BJ (cell line): ENCODE measurements at regions of chr22 and their contacts with region 1.

Region 1: GRCh38 chr22:37658133-37659065 is at the start of gene PDXP:
- DNase-seq: peak; percentile 99
- H3K4me3 ChIP-seq: peak within 1 kb of the TSS; percentile 72
- H3K27me3 ChIP-seq: no peaks in the 10 kb centered on the region
- CTCF ChIP-seq: no peak
- polyA plus RNA-seq, gene PDXP: 16.4 and 24.0 TPM in 2 replicates

Region 2: DNA sequence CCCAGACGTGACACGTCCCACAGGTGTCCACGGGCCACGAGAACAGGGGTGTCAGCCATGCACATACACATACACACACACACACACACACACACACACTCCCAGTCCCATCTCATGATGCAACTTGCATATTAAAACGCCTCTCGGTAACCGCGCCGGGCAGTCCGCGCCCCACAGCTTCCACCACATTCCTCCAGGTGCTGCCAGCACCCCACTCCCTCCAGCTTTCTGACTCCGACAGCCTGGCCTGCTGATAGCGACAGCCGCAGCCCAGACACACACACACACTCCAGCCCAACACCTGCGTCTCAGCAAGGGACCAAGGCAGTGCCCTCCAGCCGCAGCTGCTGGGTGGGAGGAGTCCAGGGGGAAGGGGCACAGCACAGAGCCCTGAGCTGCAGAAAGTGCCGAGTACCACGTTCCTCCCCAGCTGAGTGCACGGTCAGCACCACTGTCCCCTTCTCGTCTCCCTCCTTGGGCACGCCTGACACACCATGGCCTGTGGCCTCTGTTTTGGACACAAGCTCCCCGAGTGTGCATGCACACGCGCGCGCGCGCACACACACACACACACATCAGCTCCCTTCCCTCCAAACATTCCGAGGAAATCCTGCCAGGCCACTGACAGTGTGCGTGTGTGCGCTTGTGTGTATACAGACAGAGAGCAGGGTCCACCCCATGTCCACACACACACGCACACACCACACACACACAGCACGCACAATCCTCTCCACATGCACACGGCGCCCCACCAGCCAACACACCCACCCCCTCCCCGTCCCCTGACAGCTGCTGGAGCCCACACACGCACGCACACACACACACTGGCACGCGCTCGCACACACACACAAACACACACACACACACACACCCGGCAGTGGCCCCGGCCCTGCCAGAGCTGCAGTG is 232.3 kb before region 1 on chr22:
- CTCF ChIA-PET with region 1: no interaction called
- POLR2A ChIA-PET with region 1: no interaction called
- DNase-seq: no peak
- H3K4me3 ChIP-seq: peak overlapping the region; percentile 53
- H3K27me3 ChIP-seq: peaks cover 20% of the 10 kb centered on the region
- CTCF ChIP-seq: no peak

Region 3: DNA sequence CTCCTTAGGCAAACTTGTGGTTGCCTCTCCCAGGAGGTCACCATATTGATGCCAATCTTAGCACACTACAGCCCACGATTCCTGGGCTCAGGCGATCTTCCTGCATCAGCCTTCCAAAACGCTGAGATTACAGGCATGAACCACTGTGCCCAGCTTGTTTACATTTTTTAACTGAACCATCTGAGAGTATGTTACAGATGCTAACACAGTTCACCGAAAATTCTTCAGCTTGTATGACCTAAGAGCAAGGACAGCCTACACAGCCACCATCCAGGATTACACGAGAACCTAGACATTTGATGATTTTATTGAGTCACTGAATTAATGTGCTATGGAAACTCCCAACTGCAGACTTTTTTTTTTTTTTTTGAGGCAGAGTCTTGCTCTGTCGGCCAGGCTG is 11.2 kb after region 1 on chr22:
- CTCF ChIA-PET with region 1: interaction called, 11 read pairs
- POLR2A ChIA-PET with region 1: interaction called, 16 read pairs
- DNase-seq: no peak
- H3K4me3 ChIP-seq: no peak overlapping the region
- H3K27me3 ChIP-seq: no peaks in the 10 kb centered on the region
- CTCF ChIP-seq: no peak

Region 4: DNA sequence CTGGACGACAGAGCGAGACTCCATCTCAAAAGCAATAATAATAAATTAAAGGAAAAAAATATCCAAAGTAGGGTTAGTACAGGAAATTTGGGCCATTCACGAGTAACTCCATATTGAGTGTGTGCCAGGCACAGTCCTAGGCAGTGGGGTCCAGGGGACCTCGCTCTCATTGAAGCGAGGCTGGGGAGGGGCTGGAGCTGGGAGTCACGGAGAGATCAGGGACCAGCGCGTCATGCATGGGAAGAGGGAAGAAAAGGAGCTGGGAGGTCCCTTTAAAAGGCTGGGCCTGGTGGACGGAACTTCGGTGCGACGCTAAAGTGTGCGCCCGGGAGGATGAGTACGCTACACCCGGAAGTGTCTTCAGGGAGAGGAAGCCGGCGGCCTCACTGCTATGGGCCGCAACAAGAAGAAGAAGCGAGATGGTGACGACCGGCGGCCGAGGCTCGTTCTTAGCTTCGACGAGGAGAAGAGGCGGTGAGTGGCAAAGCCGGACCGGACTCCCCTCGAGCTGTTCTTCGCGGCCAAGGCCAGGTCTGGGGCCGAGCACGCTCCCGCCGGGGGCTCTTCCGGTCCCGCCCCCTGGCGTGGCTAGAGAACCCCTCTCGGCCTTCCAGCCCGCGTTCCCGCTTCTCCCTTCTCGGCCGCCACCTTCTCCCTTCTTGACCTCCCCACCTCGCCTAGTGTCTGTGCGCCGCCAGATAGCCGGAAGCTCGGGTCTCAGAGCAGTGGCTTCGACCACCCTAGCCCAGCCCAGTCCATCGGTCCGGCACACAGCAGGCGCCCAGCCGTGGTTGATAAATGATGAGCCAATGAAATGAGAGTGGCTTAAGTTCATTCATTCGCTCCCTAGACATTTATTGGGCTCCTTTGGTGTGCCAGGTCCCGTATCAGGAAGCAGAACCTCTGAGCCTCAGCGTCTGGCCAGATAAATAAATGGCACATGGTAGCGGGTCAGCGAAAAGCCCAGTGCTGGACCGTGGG is 27.9 kb after region 1 on chr22 and contains the start of gene NOL12:
- CTCF ChIA-PET with region 1: interaction called, 133 read pairs
- POLR2A ChIA-PET with region 1: no interaction called
- DNase-seq: no peak
- H3K4me3 ChIP-seq: peak within 1 kb of the TSS; percentile 76
- H3K27me3 ChIP-seq: no peaks in the 10 kb centered on the region
- CTCF ChIP-seq: no peak
- polyA plus RNA-seq, gene NOL12: 11.0 and 16.5 TPM in 2 replicates

Region 5: DNA sequence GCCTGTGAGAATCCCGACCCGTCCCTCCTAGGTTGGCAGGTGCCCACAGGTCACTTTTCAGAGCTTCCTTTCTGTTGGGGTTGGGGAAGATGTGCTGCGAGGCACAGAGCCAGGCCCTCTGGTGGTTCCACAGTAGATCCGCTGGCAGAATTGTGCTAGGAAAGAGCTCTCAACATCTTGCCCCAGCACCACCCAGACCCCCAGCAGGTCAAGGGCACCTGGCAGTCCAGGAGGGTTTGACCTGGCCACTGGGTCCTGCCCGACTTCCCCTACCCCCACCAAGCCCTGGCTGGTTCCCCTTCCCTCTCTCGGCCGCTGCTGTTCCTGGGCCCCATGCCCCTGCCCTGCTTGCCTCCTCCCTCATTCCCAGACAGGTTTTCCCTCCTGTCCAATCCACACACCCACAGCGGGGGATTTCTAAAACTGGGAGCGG is 123.1 kb after region 1 on chr22:
- CTCF ChIA-PET with region 1: interaction called, 13 read pairs
- POLR2A ChIA-PET with region 1: no interaction called
- DNase-seq: no peak
- H3K4me3 ChIP-seq: no peak overlapping the region
- H3K27me3 ChIP-seq: no peaks in the 10 kb centered on the region; the same call in 1 of the 2 replicates
- CTCF ChIP-seq: peak; percentile 31; the same call in 1 of the 2 replicates